CD8-positive, alpha-beta T cell (primary cell): ENCODE measurements at regions of chr10 and their contacts with region 1.

Region 1: DNA sequence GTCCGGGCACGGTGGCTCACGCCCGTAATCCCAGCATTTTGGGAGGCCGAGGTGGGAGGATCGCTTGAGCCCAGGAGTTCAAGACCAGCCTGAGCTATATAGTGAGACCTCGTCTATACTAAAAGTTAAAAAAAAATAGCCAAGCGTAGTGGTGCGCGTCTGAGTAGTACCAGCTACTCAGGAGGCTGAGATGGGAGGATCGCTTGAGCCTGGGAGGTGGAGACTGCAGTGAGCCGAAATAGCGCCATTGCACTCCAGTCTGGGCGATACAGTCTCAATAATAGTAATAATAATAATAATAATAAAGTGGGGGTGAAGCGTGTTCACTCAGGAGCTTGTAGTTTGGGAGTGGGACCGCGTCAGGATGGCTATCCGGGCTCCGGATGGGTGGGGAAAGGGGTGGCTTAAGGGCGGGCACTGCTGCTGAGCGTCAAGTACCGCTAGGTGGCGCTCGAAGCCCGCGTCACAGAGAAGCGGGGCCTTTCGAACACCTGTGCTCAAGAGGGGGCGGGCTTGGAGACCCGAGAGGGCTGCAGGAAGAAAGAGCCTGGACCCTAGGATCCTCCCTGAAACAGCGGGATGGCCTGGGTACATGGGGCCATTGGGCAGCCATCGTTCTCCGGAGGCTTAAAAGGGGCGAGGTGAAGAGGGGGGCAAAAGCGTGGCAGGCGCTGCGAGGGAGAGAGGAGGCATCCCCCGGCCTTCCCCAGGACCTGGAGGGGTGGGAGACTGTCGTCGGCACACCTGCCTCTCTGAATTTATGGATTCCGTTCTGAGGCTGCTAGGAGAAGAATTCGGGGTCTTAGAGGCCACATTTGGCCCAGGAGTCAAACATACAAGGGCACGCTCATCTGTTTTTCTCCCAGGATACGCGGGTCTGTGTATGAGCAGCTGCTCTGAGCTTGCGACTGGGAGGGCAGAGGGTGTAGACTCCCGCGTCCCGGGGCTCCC is 14.5 kb downstream of the LBX1 start:
- DNase-seq: peak; percentile 50 to 84 (median 74)
- ATAC-seq: peak; percentile 78
- H3K4me3 ChIP-seq: no peak overlapping the region
- H3K4me3 Mint-ChIP-seq: peak overlapping the region; percentile 68
- H3K27ac ChIP-seq: no peak overlapping the region
- H3K27ac Mint-ChIP-seq: no peak overlapping the region
- H3K4me1 ChIP-seq: peaks cover 40% of the 10 kb centered on the region
- H3K4me1 Mint-ChIP-seq: peaks cover 29% of the 10 kb centered on the region
- H3K27me3 ChIP-seq: peaks cover 46 to 59% of the 10 kb centered on the region in 2 experiments
- H3K27me3 Mint-ChIP-seq: peaks cover 64% of the 10 kb centered on the region
- CTCF ChIP-seq: peak; percentile 77

Region 2: DNA sequence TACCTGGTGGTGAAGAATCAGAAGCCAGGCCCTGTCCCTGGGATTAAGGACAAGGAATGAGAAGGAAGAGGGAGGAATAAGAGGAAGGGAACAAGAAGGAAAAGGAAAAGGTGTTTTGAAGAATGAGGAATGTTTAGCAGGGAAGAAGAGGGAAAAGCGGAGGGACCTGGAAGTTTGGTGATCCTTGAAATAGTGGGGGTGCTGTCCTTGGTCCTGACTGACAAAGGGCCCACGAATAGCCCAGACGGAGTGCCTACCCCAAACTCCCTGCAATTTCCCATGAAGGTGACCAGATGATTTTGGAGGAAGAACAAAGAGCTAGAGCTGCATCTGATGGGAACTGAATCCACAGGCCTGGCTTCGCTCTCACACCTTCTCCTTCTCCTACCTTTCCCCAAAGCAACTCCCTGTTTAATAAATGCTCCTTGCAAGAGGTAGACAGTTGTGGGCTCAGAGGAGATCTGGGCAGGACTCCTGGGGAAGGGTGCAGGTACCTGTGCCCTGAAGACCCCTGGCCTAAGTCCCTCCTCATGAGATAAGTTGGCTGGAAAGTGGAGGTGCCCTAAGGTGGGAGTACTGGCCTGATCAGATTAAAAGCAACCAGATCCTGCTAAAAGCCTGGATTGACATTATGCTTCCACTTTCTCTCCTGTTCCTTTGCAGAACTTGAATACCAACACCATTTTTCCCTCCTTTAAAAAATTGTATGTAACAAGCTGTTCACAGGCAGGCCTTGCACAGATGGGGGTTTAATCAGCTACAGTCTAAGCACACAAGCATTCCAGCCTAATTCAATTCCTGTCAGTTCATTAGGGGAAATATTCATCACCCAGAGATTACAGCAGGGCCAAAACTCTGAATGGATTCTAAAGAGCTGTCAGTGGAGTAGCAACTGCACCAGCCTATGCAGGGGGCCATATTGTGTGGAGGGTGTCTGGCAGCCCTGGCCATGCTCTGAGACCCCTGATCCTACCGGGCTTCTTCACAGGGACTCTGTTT is 133.5 kb before region 1 on chr10:
- CTCF ChIA-PET with region 1: no interaction called
- POLR2A ChIA-PET with region 1: no interaction called
- intact Hi-C with region 1: no loop called
- DNase-seq: no peak
- ATAC-seq: peak; percentile 31
- H3K4me3 ChIP-seq: no peak overlapping the region
- H3K4me3 Mint-ChIP-seq: no peak overlapping the region
- H3K27ac ChIP-seq: no peak overlapping the region
- H3K27ac Mint-ChIP-seq: no peak overlapping the region
- H3K4me1 ChIP-seq: no peaks in the 10 kb centered on the region
- H3K4me1 Mint-ChIP-seq: no peaks in the 10 kb centered on the region
- H3K27me3 ChIP-seq: no peaks in the 10 kb centered on the region
- H3K27me3 Mint-ChIP-seq: peaks cover 54% of the 10 kb centered on the region
- CTCF ChIP-seq: no peak

Region 3: DNA sequence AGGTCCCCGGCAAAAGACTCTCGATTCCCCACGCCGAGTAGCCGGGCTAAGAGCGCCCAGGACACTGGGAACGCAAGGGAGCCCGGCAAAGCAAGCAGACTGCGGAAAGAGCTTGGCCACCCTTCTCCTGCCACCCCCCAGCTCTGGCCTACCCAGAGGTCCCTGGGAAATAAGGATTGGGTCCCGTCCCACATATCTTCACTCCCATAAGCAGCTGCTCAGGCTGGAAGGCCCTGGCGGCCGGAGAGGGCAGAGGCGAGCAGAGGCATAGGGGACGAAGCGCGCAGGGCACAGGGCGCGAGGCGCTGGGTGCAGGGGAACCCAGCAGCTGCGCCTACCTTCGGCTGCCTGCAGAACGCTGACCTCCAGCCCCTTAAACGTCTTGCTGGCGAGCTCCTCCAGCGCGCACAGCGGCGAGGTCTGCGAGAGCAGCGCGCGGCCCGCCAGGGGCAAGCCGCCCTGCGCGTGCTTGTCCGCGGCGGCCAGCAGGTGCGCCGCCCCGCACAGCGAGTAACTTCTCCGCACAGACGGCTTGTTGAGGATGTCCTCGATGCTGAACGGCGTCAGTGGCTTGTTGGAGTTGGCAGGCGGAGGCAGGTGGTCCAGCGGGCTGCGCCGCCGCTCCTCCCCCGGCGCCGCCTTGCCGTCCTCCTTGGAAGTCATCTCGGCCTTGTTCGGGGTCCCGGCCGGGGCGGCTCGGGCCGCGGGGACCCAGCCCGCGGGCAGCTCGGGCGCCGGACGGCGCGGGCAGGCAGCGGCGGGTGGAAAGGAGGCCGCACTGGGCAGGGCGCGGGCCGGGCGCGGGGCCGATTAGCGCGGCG is 13.6 kb after region 1 on chr10:
- CTCF ChIA-PET with region 1: interaction called, 100 read pairs
- POLR2A ChIA-PET with region 1: no interaction called
- intact Hi-C with region 1: no loop called
- DNase-seq: peak in 2 of 9 experiments; percentile 16 to 20
- ATAC-seq: no peak
- H3K4me3 ChIP-seq: no peak overlapping the region
- H3K4me3 Mint-ChIP-seq: peak overlapping the region; percentile 72
- H3K27ac ChIP-seq: no peak overlapping the region
- H3K27ac Mint-ChIP-seq: no peak overlapping the region
- H3K4me1 ChIP-seq: peaks cover 55% of the 10 kb centered on the region
- H3K4me1 Mint-ChIP-seq: peaks cover 38% of the 10 kb centered on the region
- H3K27me3 ChIP-seq: peaks cover 60 to 70% of the 10 kb centered on the region in 2 experiments
- H3K27me3 Mint-ChIP-seq: peaks cover 71% of the 10 kb centered on the region
- CTCF ChIP-seq: no peak

Region 4: GRCh38 chr10:101272229-101272868 is 57.6 kb after region 1 on chr10:
- CTCF ChIA-PET with region 1: interaction called, 16 read pairs
- POLR2A ChIA-PET with region 1: no interaction called
- intact Hi-C with region 1: loop called in 1 of 2 experiments (anchors 5 kb)
- DNase-seq: peak; percentile 34 to 70 (median 55)
- ATAC-seq: peak; percentile 80
- H3K4me3 ChIP-seq: no peak overlapping the region
- H3K4me3 Mint-ChIP-seq: no peak overlapping the region
- H3K27ac ChIP-seq: no peak overlapping the region
- H3K27ac Mint-ChIP-seq: no peak overlapping the region
- H3K4me1 ChIP-seq: no peaks in the 10 kb centered on the region
- H3K4me1 Mint-ChIP-seq: no peaks in the 10 kb centered on the region
- H3K27me3 ChIP-seq: peaks cover 0 to 2% of the 10 kb centered on the region in 2 experiments
- H3K27me3 Mint-ChIP-seq: peaks cover 34% of the 10 kb centered on the region
- CTCF ChIP-seq: peak; percentile 65

Region 5: GRCh38 chr10:101319241-101319915 is 104.7 kb after region 1 on chr10:
- CTCF ChIA-PET with region 1: interaction called, 10 read pairs
- POLR2A ChIA-PET with region 1: no interaction called
- intact Hi-C with region 1: no loop called
- DNase-seq: no peak
- ATAC-seq: no peak
- H3K4me3 ChIP-seq: no peak overlapping the region
- H3K4me3 Mint-ChIP-seq: no peak overlapping the region
- H3K27ac ChIP-seq: no peak overlapping the region
- H3K27ac Mint-ChIP-seq: no peak overlapping the region
- H3K4me1 ChIP-seq: no peaks in the 10 kb centered on the region
- H3K4me1 Mint-ChIP-seq: no peaks in the 10 kb centered on the region
- H3K27me3 ChIP-seq: no peaks in the 10 kb centered on the region
- H3K27me3 Mint-ChIP-seq: peaks cover 13% of the 10 kb centered on the region
- CTCF ChIP-seq: no peak

Region 6: DNA sequence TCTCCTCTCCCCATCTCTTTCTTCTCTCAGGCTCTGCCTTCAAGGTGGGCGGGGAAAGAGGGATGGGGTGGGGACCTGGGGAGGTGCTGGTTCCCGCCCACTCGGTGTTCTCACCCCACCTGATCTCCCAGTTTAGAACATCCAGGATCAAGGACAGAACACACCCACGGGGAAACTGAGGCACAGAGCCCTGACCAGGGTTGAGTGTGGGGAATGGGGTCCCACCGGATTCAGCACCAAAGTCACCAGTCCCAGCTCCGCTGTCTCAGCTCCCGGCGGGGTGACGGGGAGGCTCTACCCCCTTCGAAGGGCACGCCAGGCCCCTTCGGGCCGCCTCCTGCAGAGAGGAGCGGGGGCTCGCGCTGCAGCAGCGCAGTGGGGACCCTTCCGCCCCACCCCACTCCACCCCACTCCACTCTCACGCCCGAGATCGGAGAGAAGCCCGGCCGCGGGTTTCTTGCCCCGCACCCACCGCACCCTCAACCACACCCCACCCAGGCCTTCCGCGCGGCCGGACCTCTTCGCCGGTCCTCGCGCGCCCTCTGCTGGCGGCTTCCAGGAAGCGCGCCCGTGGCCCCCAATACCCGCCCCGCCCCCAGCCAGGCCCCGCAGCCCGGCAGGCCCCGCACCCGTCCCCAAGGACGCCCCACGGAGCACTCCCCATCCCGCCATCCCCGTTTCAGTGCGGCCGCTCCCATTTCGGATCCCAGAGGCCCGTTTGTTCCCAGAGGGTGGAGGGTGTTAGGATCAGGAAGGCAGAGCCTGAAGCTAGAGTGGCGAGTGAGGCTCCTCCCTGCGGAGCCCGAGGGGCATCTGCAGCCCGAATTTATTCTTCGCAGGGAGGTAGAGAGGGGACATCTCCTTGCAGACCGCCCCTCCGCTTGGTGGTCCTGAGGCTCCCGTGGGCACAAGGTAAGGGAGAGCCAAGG is 355.4 kb after region 1 on chr10:
- CTCF ChIA-PET with region 1: interaction called, 118 read pairs
- POLR2A ChIA-PET with region 1: no interaction called
- intact Hi-C with region 1: loop called (anchors 1 kb)
- DNase-seq: peak; percentile 67 to 90 (median 79)
- ATAC-seq: peak; percentile 92
- H3K4me3 ChIP-seq: peak overlapping the region; percentile 69
- H3K4me3 Mint-ChIP-seq: peak overlapping the region; percentile 72
- H3K27ac ChIP-seq: no peak overlapping the region
- H3K27ac Mint-ChIP-seq: no peak overlapping the region
- H3K4me1 ChIP-seq: peaks cover 16% of the 10 kb centered on the region
- H3K4me1 Mint-ChIP-seq: peaks cover 20% of the 10 kb centered on the region
- H3K27me3 ChIP-seq: peaks cover 27 to 30% of the 10 kb centered on the region in 2 experiments
- H3K27me3 Mint-ChIP-seq: peaks cover 38% of the 10 kb centered on the region
- CTCF ChIP-seq: peak; percentile 89

Region 7: DNA sequence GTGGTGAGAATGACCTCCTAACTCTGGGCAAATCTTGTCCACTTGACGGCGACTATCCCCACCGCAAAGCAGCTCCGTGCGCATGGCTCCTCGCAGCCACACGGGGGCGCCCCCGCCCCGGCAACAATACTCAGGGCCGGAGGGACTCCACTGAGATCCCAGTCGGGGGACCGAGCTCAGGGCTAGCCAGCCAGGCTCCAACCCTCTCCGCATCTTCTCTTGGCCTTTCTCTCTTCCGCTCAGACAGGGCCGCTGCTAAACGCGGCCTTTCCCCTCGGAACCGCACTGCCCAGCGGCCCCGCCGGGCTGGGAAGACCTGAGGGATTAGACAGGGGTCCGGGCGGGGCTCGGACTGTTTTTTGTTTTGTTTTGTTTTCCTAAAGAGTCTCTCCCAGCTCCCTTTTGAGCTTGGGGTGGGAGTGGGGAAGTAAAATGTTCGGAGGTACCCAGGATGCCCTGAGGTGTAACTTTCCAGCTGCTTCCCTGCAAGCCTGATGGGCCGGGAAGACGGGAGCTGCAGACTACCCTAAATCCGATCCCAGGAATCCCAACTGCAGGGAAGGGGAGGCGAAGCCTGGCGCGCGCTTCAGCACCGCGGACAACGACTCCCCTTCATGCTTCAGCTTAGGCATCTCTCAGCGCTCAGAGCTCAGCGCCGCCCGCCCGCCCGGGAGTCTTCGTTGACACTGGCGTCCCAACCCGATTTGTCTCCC is 626.2 kb after region 1 on chr10:
- CTCF ChIA-PET with region 1: no interaction called
- POLR2A ChIA-PET with region 1: no interaction called
- intact Hi-C with region 1: loop called in 1 of 2 experiments (anchors 10 kb)
- DNase-seq: peak; percentile 39 to 82 (median 72)
- ATAC-seq: peak; percentile 44
- H3K4me3 ChIP-seq: peak overlapping the region; percentile 47 to 48
- H3K4me3 Mint-ChIP-seq: peak overlapping the region; percentile 84
- H3K27ac ChIP-seq: no peak overlapping the region
- H3K27ac Mint-ChIP-seq: no peak overlapping the region
- H3K4me1 ChIP-seq: peaks cover 38% of the 10 kb centered on the region
- H3K4me1 Mint-ChIP-seq: peaks cover 48% of the 10 kb centered on the region
- H3K27me3 ChIP-seq: no peaks in the 10 kb centered on the region
- H3K27me3 Mint-ChIP-seq: peaks cover 8% of the 10 kb centered on the region
- CTCF ChIP-seq: peak; percentile 84